ENCODE measurements at regions of chr16 and their contacts with region 1.

Region 1: GRCh38 chr16:20938426-20938825 is 37.9 kb downstream of the LYRM1 start:
- DNase-seq: peak; percentile 60
- H3K4me3 Mint-ChIP-seq: no peak overlapping the region
- H3K27ac Mint-ChIP-seq: peak overlapping the region; percentile 84
- H3K4me1 Mint-ChIP-seq: peaks cover 30% of the 10 kb centered on the region
- H3K27me3 Mint-ChIP-seq: no peaks in the 10 kb centered on the region

Region 2: DNA sequence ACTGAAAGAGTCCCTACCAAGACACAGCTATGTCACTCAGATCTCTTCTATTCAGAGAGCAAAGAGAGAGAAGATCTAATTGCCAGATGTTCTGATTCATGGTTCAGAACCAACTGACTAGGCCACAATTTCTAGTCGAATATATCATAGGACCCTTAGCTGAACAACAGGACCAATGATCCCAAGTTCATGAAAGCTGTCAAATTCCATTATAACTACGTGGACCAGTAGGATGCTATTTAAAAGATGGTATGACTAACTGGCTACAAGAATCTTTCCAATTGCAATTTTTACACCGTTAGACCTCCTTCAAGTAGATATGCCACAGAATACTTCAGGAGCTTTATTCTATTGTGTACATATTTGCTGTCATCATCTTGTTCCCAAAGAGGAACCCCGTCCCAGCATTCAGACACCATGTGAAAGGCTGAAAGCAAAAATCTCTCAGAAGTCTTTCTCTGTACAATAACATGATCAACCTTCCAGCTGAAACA is 64.3 kb before region 1 on chr16:
- intact Hi-C with region 1: loop called (anchors 2 kb)
- DNase-seq: peak; percentile 80
- H3K4me3 Mint-ChIP-seq: peak overlapping the region; percentile 70
- H3K27ac Mint-ChIP-seq: peak overlapping the region; percentile 86
- H3K4me1 Mint-ChIP-seq: peaks cover 68% of the 10 kb centered on the region
- H3K27me3 Mint-ChIP-seq: no peaks in the 10 kb centered on the region

Region 3: GRCh38 chr16:21001262-21001661 is 62.8 kb after region 1 on chr16:
- intact Hi-C with region 1: no loop called
- DNase-seq: peak; percentile 75
- H3K4me3 Mint-ChIP-seq: no peak overlapping the region
- H3K27ac Mint-ChIP-seq: no peak overlapping the region
- H3K4me1 Mint-ChIP-seq: no peaks in the 10 kb centered on the region
- H3K27me3 Mint-ChIP-seq: peaks cover 13% of the 10 kb centered on the region